ENCODE measurements at regions of chr1 and their contacts with region 1.

Region 1: DNA sequence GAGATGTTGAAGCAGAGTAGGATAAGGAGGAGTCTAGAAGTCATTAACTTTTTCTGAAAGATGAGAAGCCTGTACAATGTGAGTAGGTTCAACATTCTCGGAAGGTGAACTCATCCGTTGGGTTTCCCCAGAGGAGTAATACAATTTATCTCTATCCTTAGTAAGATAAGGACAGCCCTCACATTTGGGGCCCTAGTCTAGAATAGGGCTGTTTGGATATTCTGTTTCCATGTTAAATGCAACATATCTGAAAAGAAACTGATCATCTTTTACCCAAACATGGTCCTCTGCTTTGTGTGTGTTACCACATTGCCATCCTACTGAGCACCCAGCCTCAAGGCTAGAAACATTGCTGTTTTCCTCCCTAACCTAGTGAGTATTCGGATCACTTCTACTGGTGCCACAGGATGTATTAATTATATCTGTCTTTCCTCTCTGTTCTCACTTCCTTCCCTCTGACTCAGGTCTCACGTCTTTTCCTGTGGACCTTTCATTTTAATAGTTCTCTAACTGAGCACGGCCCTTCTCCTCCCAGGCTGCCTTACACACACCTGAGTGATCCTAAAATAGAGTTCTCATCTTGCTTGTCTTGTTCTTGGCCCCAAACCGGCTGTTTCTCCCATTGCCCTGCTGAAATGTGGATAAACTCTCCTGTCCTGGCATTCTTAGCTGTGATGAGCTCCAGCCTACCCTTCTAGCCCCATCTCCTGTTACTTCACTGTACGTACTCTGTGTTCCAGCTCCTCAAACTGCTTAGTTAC is 91.7 kb downstream of the CDC14A start:
- DNase-seq: peak in 4 of 14 experiments; percentile 46 to 84 (median 68)
- ATAC-seq: peak; percentile 25
- H3K4me3 ChIP-seq: peak overlapping the region; percentile 16
- H3K4me3 Mint-ChIP-seq: peak overlapping the region; percentile 63
- H3K27ac ChIP-seq: peak overlapping the region; percentile 95 to 98
- H3K27ac Mint-ChIP-seq: peak overlapping the region; percentile 94
- H3K4me1 ChIP-seq: peaks cover 61% of the 10 kb centered on the region
- H3K4me1 Mint-ChIP-seq: peaks cover 93% of the 10 kb centered on the region
- H3K27me3 ChIP-seq: no peaks in the 10 kb centered on the region
- H3K27me3 Mint-ChIP-seq: no peaks in the 10 kb centered on the region
- CTCF ChIP-seq: no peak

Region 2: GRCh38 chr1:100387209-100387608 is 56.8 kb before region 1 on chr1:
- CTCF ChIA-PET with region 1: interaction called, 4 read pairs
- POLR2A ChIA-PET with region 1: interaction called, 12 read pairs
- intact Hi-C with region 1: no loop called
- DNase-seq: peak in 2 of 14 experiments; percentile 32
- ATAC-seq: no peak
- H3K4me3 ChIP-seq: peak overlapping the region; percentile 35
- H3K4me3 Mint-ChIP-seq: peak overlapping the region; percentile 74
- H3K27ac ChIP-seq: peak overlapping the region in 1 of 2 donors; percentile 78
- H3K27ac Mint-ChIP-seq: peak overlapping the region; percentile 83
- H3K4me1 ChIP-seq: peaks cover 55% of the 10 kb centered on the region
- H3K4me1 Mint-ChIP-seq: peaks cover 94% of the 10 kb centered on the region
- H3K27me3 ChIP-seq: no peaks in the 10 kb centered on the region
- H3K27me3 Mint-ChIP-seq: no peaks in the 10 kb centered on the region
- CTCF ChIP-seq: no peak

Region 3: DNA sequence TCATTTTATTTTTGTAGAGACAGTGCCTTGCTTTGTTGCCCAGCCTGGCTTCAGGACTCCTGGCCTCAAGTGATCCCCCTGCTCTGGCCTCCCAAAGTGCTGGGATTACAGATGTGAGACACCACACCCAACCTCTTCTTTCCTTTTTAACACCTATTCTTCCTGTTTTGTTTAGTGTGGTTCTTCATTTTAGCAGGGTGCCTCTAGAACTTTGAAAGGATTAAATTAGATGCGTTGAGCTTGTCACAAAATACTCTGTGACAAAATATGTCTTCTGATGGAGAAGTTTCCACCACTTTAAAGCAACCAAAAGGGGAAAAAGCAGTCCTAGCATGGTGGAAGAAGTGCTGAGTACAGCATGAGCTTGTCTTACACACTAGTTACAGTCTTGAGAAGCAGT is 49.7 kb before region 1 on chr1:
- CTCF ChIA-PET with region 1: interaction called, 6 read pairs
- POLR2A ChIA-PET with region 1: interaction called, 20 read pairs
- intact Hi-C with region 1: no loop called
- DNase-seq: peak in 2 of 14 experiments; percentile 28 to 68
- ATAC-seq: no peak
- H3K4me3 ChIP-seq: no peak overlapping the region
- H3K4me3 Mint-ChIP-seq: peak overlapping the region; percentile 62
- H3K27ac ChIP-seq: peak overlapping the region; percentile 40 to 73
- H3K27ac Mint-ChIP-seq: peak overlapping the region; percentile 85
- H3K4me1 ChIP-seq: peaks cover 53% of the 10 kb centered on the region
- H3K4me1 Mint-ChIP-seq: peaks cover 99% of the 10 kb centered on the region
- H3K27me3 ChIP-seq: no peaks in the 10 kb centered on the region
- H3K27me3 Mint-ChIP-seq: no peaks in the 10 kb centered on the region
- CTCF ChIP-seq: no peak

Region 4: DNA sequence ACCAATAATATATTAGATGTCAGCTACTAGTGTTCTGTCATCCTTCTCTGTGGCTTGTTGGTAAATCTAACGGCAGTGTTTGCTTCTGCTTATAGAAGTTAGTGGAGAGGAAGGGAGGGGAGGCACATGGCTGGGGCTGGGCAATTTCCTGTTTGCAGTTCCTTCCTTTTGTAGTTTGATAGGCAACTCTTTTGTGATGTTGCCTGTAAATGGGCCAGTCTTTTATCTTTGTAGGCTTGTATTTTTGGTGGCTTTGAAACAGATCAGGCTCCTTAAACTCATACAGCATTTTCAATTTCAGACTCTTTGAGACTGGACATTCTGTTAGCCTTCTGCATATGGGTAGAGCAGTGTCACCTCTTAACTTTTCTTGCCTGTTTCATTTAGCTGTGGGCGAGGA is 43.6 kb before region 1 on chr1:
- CTCF ChIA-PET with region 1: interaction called, 6 read pairs
- POLR2A ChIA-PET with region 1: interaction called, 20 read pairs
- intact Hi-C with region 1: loop called (anchors 5 kb)
- DNase-seq: peak; percentile 54 to 91 (median 68)
- ATAC-seq: peak; percentile 91
- H3K4me3 ChIP-seq: peak overlapping the region; percentile 15
- H3K4me3 Mint-ChIP-seq: peak overlapping the region; percentile 81
- H3K27ac ChIP-seq: peak overlapping the region; percentile 51
- H3K27ac Mint-ChIP-seq: peak overlapping the region; percentile 85
- H3K4me1 ChIP-seq: peaks cover 62% of the 10 kb centered on the region
- H3K4me1 Mint-ChIP-seq: peaks cover 94% of the 10 kb centered on the region
- H3K27me3 ChIP-seq: no peaks in the 10 kb centered on the region
- H3K27me3 Mint-ChIP-seq: no peaks in the 10 kb centered on the region
- CTCF ChIP-seq: no peak

Region 5: DNA sequence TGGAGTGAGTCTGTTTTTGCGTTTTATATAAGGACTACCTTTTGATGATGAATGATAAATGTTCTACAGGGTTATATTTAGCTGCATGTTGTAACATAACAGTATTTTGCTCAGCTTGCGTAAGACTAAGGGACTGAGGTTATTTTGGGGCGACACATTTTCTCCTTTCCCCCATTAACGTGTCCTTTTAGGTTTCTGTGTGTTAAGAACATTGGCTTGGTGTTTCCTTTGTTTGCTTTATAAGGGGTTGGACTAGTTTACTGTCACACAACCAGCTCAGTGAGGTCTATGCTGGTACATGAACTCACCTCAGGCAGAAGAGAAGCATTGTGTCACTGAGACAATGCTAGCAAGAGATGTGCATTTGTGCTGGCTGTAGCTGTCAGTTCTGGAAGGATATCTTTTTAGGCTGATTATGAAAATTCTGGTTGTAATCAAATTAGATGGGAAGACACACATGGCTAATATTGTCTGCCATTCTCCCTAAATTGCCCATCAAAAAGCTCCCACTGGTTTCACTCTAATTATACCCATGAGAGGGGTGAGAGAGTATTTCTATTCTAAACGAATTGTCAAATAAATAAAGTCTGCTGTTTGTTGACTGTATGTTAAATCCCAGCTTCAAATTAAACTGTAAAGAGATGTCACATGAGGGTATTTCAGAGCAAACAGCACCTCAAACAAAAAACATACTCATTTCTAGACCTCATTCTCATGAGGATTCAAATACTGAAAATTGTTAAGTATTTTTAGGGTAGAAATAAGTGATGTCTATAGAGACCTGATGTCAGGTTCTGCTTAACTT is 29.1 kb before region 1 on chr1:
- CTCF ChIA-PET with region 1: no interaction called
- POLR2A ChIA-PET with region 1: interaction called, 34 read pairs
- intact Hi-C with region 1: no loop called
- DNase-seq: peak in 3 of 14 experiments; percentile 54 to 81 (median 56)
- ATAC-seq: peak; percentile 82
- H3K4me3 ChIP-seq: no peak overlapping the region
- H3K4me3 Mint-ChIP-seq: peak overlapping the region; percentile 74
- H3K27ac ChIP-seq: peak overlapping the region; percentile 3 to 59
- H3K27ac Mint-ChIP-seq: peak overlapping the region; percentile 86
- H3K4me1 ChIP-seq: peaks cover 63% of the 10 kb centered on the region
- H3K4me1 Mint-ChIP-seq: peaks cover 88% of the 10 kb centered on the region
- H3K27me3 ChIP-seq: no peaks in the 10 kb centered on the region
- H3K27me3 Mint-ChIP-seq: no peaks in the 10 kb centered on the region
- CTCF ChIP-seq: no peak

Region 6: DNA sequence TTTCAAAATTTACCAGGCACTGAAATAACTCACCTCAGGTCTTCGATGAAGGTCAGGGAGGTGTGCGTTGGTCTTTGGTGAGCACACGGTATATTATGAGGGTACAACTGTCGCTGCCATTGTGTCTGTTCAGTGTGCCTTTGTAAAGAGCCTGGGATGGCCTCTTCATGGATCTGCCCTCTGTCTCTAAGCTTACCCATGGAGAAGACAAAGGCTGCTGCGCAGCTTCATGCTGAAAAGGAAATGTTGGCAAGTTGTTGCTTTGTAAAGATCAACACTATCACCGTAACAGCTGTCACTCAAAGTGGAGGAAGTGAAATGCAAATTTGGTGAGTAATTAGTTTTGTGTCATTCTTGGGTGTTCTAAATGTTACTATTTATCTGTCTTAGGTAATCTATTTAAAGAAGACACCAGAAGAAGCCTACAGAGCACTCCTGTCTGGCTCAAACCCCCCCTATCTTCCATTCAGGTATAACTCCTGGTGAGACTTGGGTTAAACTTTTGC is 20.1 kb before region 1 on chr1:
- CTCF ChIA-PET with region 1: interaction called, 16 read pairs
- POLR2A ChIA-PET with region 1: interaction called, 59 read pairs
- intact Hi-C with region 1: loop called in 1 of 2 experiments (anchors 2 kb)
- DNase-seq: peak in 9 of 14 experiments; percentile 11 to 85 (median 33)
- ATAC-seq: peak; percentile 74
- H3K4me3 ChIP-seq: peak overlapping the region; percentile 51
- H3K4me3 Mint-ChIP-seq: peak overlapping the region; percentile 91
- H3K27ac ChIP-seq: peak overlapping the region; percentile 49 to 54
- H3K27ac Mint-ChIP-seq: peak overlapping the region; percentile 94
- H3K4me1 ChIP-seq: peaks cover 34% of the 10 kb centered on the region
- H3K4me1 Mint-ChIP-seq: peaks cover 84% of the 10 kb centered on the region
- H3K27me3 ChIP-seq: no peaks in the 10 kb centered on the region
- H3K27me3 Mint-ChIP-seq: no peaks in the 10 kb centered on the region
- CTCF ChIP-seq: peak; percentile 14

Region 7: GRCh38 chr1:100430325-100430813 is 13.6 kb before region 1 on chr1:
- CTCF ChIA-PET with region 1: no interaction called
- POLR2A ChIA-PET with region 1: interaction called, 59 read pairs
- intact Hi-C with region 1: loop called in 1 of 2 experiments (anchors 2 kb)
- DNase-seq: no peak
- ATAC-seq: no peak
- H3K4me3 ChIP-seq: no peak overlapping the region
- H3K4me3 Mint-ChIP-seq: no peak overlapping the region
- H3K27ac ChIP-seq: no peak overlapping the region
- H3K27ac Mint-ChIP-seq: peak overlapping the region; percentile 68
- H3K4me1 ChIP-seq: peaks cover 41% of the 10 kb centered on the region
- H3K4me1 Mint-ChIP-seq: peaks cover 78% of the 10 kb centered on the region
- H3K27me3 ChIP-seq: no peaks in the 10 kb centered on the region
- H3K27me3 Mint-ChIP-seq: no peaks in the 10 kb centered on the region
- CTCF ChIP-seq: no peak

Region 8: DNA sequence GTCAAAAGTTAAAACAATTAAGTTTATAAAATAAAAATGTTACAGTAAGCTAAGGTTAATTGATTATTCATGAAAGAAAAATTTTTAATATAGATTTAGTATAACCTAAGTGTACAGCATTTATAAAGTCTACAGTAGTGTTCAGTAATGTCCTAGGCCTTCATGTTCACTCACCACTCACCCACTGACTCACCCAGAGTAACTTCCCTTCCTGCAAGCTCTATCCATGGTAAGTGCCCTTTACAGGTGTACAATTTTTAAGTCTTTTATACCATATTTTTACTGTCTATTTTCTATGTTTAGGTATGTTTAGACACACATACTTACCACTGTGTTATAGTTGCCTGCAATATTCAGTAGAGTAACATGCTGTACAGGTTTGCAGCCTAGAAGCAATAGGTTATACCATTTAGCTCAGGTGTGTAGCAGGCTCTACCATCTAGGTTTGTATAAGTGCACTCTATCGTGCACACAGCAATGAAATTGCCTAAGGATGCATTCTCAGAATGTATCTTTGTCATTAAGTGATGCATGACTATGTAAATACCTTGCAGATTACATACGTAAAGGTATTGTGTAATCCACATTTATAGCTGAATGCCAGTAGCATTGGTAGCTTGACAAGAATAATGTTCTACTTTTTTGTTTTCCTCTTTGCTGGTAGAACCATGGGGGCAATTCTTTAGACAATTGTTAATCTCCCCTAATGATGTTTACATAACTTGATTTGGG is 58.2 kb after region 1 on chr1:
- CTCF ChIA-PET with region 1: no interaction called
- POLR2A ChIA-PET with region 1: no interaction called
- intact Hi-C with region 1: no loop called
- DNase-seq: no peak
- ATAC-seq: no peak
- H3K4me3 ChIP-seq: no peak overlapping the region
- H3K4me3 Mint-ChIP-seq: no peak overlapping the region
- H3K27ac ChIP-seq: no peak overlapping the region
- H3K27ac Mint-ChIP-seq: peak overlapping the region; percentile 30
- H3K4me1 ChIP-seq: no peaks in the 10 kb centered on the region
- H3K4me1 Mint-ChIP-seq: peaks cover 32% of the 10 kb centered on the region
- H3K27me3 ChIP-seq: no peaks in the 10 kb centered on the region
- H3K27me3 Mint-ChIP-seq: no peaks in the 10 kb centered on the region
- CTCF ChIP-seq: no peak

Region 9: GRCh38 chr1:100866041-100866900 is 422.3 kb after region 1 on chr1:
- CTCF ChIA-PET with region 1: no interaction called
- POLR2A ChIA-PET with region 1: no interaction called
- intact Hi-C with region 1: no loop called
- DNase-seq: peak in 3 of 14 experiments; percentile 33 to 48 (median 41)
- ATAC-seq: no peak
- H3K4me3 ChIP-seq: no peak overlapping the region
- H3K4me3 Mint-ChIP-seq: no peak overlapping the region
- H3K27ac ChIP-seq: no peak overlapping the region
- H3K27ac Mint-ChIP-seq: no peak overlapping the region
- H3K4me1 ChIP-seq: no peaks in the 10 kb centered on the region
- H3K4me1 Mint-ChIP-seq: no peaks in the 10 kb centered on the region
- H3K27me3 ChIP-seq: no peaks in the 10 kb centered on the region
- H3K27me3 Mint-ChIP-seq: no peaks in the 10 kb centered on the region
- CTCF ChIP-seq: peak; percentile 60